ENCODE measurements at regions of chr9 and their contacts with region 1.

Region 1: DNA sequence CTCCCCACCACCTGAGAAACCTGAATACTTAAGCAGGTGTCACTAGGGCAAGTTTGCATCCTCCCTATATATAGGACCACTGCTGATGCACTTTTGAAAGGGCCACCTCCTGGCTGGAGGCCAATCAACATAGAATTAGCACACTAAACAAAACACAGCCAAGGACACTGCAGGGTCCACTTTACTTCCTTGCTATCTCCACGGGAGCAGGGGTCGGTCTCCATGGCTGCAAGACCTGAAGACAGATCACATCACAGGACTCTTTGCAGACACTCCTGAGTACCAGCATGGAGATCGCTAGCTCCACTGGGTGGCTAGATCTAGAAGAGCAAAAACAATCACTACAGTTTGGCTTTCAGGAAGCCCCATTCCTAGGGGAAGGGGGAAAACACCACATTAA is 72.3 kb downstream of the C9orf153 start:
- DNase-seq: peak; percentile 55
- ATAC-seq: peak; percentile 97
- H3K4me3 Mint-ChIP-seq: no peak overlapping the region
- H3K27ac Mint-ChIP-seq: peak overlapping the region; percentile 33
- H3K4me1 Mint-ChIP-seq: peaks cover 26% of the 10 kb centered on the region
- H3K27me3 Mint-ChIP-seq: peaks cover 4% of the 10 kb centered on the region
- CTCF ChIP-seq: no peak

Region 2: GRCh38 chr9:86077286-86077685 is 109.8 kb before region 1 on chr9:
- CTCF ChIA-PET with region 1: interaction called, 14 read pairs
- POLR2A ChIA-PET with region 1: no interaction called
- DNase-seq: no peak
- ATAC-seq: no peak
- H3K4me3 Mint-ChIP-seq: no peak overlapping the region
- H3K27ac Mint-ChIP-seq: no peak overlapping the region
- H3K4me1 Mint-ChIP-seq: peaks cover 25% of the 10 kb centered on the region
- H3K27me3 Mint-ChIP-seq: no peaks in the 10 kb centered on the region
- CTCF ChIP-seq: no peak